ENCODE measurements at regions of chr2 and their contacts with region 1.

Region 1: DNA sequence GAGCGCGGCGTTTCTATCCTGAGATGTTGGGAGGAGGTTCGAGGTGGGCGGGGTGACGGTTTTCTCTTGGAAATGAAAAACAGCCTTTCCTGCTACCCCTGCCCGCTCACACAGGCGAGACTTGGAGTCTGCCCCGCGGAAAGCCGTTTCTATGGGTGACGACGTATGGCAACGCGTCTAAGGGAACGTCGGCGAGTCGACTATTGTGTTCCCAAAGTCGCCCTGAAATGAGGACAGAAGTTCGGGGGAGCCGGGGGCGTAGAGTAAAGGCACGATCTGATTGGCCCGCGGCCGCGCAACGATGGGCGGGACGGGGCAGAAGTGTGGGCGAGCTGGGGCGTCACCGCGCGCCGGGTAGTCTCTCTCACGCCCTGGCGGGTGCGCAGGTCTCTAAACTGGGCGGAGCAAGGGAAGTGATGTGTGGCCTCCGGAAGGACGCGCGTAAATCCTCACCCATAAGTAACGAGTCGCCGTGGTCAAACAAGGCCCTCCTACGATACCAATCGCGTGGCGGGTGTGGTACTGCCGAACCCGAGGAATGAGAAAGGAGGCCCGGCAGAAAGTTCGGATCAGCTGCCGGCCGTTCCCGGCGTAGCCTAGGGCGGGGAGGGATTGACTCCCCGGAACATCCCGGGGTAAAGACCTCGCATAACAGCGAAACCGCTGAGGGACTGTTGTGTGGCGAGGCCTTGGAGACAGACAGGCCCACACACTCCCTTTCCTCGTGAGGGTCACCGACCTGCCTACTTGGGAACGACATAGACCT is 89.6 kb downstream of the FAM161A start:
- DNase-seq: peak; percentile 99
- ATAC-seq: peak; percentile 97
- H3K4me3 Mint-ChIP-seq: peak overlapping the region; percentile 93
- H3K27ac Mint-ChIP-seq: peak overlapping the region; percentile 95
- H3K4me1 Mint-ChIP-seq: peaks cover 15% of the 10 kb centered on the region
- H3K27me3 Mint-ChIP-seq: no peaks in the 10 kb centered on the region

Region 2: GRCh38 chr2:61016808-61017555 is 747.2 kb before region 1 on chr2:
- CTCF ChIA-PET with region 1: no interaction called
- POLR2A ChIA-PET with region 1: no interaction called
- intact Hi-C with region 1: loop called in 1 of 2 experiments (anchors 1 kb)
- DNase-seq: peak; percentile 81
- ATAC-seq: peak; percentile 75
- H3K4me3 Mint-ChIP-seq: peak overlapping the region; percentile 98
- H3K27ac Mint-ChIP-seq: peak overlapping the region; percentile 95
- H3K4me1 Mint-ChIP-seq: peaks cover 32% of the 10 kb centered on the region
- H3K27me3 Mint-ChIP-seq: no peaks in the 10 kb centered on the region

Region 3: DNA sequence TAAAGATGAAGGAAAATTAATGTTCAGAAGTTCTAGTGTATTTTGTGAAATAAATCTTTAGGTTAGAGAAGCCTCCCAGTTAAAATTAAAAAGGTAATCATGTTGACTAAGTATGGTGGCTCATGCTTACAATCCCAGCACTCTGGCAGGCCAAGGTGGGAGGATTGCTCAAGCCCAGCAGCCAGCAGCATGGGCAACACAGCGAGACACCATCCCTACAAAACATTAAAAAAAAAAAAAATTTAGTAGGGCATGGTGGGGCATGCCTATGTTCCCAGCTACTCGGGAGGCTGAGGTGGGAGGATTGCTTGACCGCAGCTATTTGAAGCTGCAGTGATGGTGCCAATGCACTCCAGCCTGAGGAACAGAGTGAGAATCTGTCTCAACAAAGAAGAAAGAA is 244.0 kb before region 1 on chr2:
- CTCF ChIA-PET with region 1: no interaction called
- POLR2A ChIA-PET with region 1: no interaction called
- intact Hi-C with region 1: no loop called
- DNase-seq: no peak
- ATAC-seq: no peak
- H3K4me3 Mint-ChIP-seq: no peak overlapping the region
- H3K27ac Mint-ChIP-seq: no peak overlapping the region
- H3K4me1 Mint-ChIP-seq: peaks cover 17% of the 10 kb centered on the region
- H3K27me3 Mint-ChIP-seq: no peaks in the 10 kb centered on the region

Region 4: GRCh38 chr2:61670591-61671501 is 93.4 kb before region 1 on chr2:
- CTCF ChIA-PET with region 1: no interaction called
- POLR2A ChIA-PET with region 1: no interaction called
- intact Hi-C with region 1: loop called in 1 of 2 experiments (anchors 1 kb)
- DNase-seq: peak; percentile 52
- ATAC-seq: peak; percentile 96
- H3K4me3 Mint-ChIP-seq: peak overlapping the region; percentile 32
- H3K27ac Mint-ChIP-seq: peak overlapping the region; percentile 76
- H3K4me1 Mint-ChIP-seq: peaks cover 20% of the 10 kb centered on the region
- H3K27me3 Mint-ChIP-seq: no peaks in the 10 kb centered on the region

Region 5: DNA sequence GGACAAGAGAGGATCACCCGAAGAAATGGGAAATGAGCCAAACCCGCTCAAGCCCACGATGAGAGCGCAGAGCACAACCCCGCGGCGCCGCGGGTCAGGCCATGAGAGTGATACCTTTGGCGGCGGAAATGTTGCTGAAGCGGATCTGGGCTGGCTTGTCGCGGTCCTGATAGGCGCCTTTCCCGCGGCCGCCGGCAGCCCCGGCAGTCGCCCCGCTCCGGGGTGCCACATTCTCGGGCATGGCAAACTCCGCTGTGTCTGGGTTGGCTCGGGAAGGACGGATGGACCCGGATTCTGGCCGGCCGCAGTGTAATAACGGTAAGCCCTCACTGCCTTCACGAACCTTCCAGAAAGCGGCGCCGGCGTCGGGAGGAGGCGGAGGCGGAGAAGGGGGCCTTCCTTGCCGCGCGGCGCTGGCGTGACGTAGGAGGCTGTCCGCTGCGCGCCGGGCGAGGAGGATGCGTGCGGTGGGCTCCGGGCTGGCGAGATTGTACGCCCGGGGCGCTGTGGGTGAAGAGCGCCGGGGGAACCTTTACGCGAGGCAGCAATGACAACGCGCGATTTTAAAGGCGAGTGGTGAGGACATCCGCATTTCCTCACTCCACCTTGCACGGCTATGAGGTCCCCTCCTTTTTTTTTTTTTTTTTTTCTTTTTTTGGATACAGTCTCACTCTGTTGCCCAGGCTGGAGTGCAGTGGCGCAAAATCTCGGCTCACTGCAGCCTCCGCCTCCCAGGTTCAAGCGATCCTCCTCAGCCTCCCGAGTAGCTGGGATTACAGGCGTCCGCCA is 124.2 kb after region 1 on chr2 and contains the start of gene CCT4:
- CTCF ChIA-PET with region 1: no interaction called
- POLR2A ChIA-PET with region 1: no interaction called
- intact Hi-C with region 1: loop called (anchors 1 to 5 kb)
- DNase-seq: peak; percentile 93
- ATAC-seq: peak; percentile 79
- H3K4me3 Mint-ChIP-seq: peak within 1 kb of the TSS; percentile 99
- H3K27ac Mint-ChIP-seq: peak within 1 kb of the TSS; percentile 99
- H3K4me1 Mint-ChIP-seq: peaks cover 31% of the 10 kb centered on the region
- H3K27me3 Mint-ChIP-seq: no peaks in the 10 kb centered on the region
- total RNA-seq, gene CCT4: 255 to 373 TPM

Region 6: GRCh38 chr2:62099523-62100175 is 335.4 kb after region 1 on chr2:
- CTCF ChIA-PET with region 1: no interaction called
- POLR2A ChIA-PET with region 1: no interaction called
- intact Hi-C with region 1: no loop called
- DNase-seq: no peak
- ATAC-seq: no peak
- H3K4me3 Mint-ChIP-seq: no peak overlapping the region
- H3K27ac Mint-ChIP-seq: no peak overlapping the region
- H3K4me1 Mint-ChIP-seq: peaks cover 2% of the 10 kb centered on the region
- H3K27me3 Mint-ChIP-seq: no peaks in the 10 kb centered on the region

Region 7: GRCh38 chr2:62202019-62202722 is 438.0 kb after region 1 on chr2:
- CTCF ChIA-PET with region 1: no interaction called
- POLR2A ChIA-PET with region 1: no interaction called
- intact Hi-C with region 1: loop called (anchors 1 to 10 kb)
- DNase-seq: no peak
- ATAC-seq: no peak
- H3K4me3 Mint-ChIP-seq: peak overlapping the region; percentile 3
- H3K27ac Mint-ChIP-seq: peak overlapping the region; percentile 97
- H3K4me1 Mint-ChIP-seq: peaks cover 87% of the 10 kb centered on the region
- H3K27me3 Mint-ChIP-seq: no peaks in the 10 kb centered on the region